PC-3 (cell line): ENCODE measurements at regions of chr10 and their contacts with region 1.

Region 1: GRCh38 chr10:51231754-51232153 is 157.5 kb downstream of the PRKG1 start:
- DNase-seq: peak; percentile 94
- ATAC-seq: peak; percentile 78
- H3K4me3 ChIP-seq: no peak overlapping the region
- H3K27ac ChIP-seq: no peak overlapping the region
- H3K4me1 ChIP-seq: peaks cover 34% of the 10 kb centered on the region
- H3K27me3 ChIP-seq: no peaks in the 10 kb centered on the region
- CTCF ChIP-seq: no peak

Region 2: DNA sequence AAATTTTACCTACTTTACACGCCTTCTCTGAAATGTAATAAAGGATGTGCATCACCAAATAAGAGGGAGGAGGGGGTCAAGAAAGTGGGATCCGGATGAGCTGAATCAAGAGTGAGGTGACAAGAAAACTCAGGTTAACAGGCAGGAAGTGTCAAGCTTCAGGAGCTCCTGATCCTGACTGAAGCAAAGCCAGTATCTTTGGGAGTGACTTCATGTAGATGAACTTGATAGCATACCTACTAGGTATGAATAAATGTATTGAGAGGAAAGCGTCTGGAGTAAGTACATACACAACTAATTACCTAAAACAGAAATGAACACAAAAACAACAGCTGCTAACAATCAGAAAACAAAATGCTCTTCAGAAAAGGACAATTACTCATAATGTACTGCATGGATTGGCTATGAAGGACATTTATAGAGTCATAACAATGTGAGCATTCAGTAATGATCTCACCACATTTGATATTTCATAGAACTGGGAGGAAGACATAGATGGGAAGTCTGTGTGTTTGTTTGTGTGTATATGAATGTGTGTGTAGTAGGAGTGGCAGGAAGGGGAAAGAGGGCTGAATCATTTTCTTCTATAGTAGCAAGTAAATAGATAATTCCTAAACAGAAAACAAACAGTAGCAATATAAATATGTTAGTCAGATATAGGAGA is 128.1 kb before region 1 on chr10:
- CTCF ChIA-PET with region 1: no interaction called
- POLR2A ChIA-PET with region 1: no interaction called
- intact Hi-C with region 1: loop called (anchors 2 kb)
- DNase-seq: peak; percentile 99
- ATAC-seq: peak; percentile 99
- H3K4me3 ChIP-seq: peak overlapping the region; percentile 26; the same call in 1 of the 2 replicates
- H3K27ac ChIP-seq: peak overlapping the region; percentile 73
- H3K4me1 ChIP-seq: peaks cover 30% of the 10 kb centered on the region
- H3K27me3 ChIP-seq: no peaks in the 10 kb centered on the region
- CTCF ChIP-seq: no peak